Esophagus squamous epithelium (tissue), 5 donors: ENCODE measurements at regions of chr1 and their contacts with region 1.

Region 1: DNA sequence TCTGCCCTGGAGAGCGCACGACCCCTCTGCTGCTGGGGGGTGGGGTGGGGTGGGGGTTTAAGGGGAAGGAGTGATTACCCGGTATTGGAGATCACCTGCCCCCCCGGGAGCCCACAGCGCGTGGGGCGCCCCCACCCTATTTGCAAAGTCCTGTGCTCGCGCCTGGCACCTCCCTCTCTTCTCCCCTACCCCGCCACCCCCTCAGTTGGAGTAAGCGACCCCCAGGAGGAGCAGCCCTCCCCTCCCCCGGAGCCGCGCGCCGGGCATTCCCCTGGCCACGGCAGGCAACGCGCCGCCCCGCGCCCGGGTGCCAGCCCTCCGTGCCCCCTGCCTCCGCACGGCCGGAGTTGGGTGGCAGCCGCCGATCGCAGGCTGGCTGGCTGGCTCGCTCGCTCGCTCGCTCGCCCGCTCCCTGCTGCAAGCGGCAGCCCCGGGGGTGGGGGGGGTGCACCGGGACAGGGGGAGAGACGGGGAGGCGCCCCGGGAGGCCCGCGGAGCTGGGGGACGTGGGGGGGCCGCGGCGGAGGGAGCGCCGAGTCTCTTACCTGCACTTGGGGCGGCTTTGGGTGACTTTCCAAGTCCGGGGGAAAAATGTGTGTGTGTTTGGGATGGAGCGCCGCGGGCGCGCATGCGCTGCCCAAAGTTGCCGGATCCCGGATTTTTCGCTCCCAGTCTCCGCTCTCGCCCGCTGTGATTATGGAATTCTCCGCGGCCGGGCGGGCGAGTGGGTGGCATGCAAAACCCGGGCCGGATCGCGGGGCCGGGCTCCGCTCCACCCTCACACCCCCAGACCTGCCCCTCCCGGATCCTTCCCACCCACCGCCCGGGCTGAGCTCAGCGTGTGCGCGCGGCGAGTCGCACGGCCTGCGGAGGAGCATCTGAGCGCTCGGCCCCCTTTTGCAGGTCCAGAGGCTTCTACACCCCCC is at the start of gene CASZ1:
- DNase-seq: no peak
- H3K4me3 ChIP-seq: peak within 1 kb of the TSS; percentile 77 to 88 (median 86)
- H3K27ac ChIP-seq: peak within 1 kb of the TSS; percentile 85 to 93 (median 90)
- H3K4me1 ChIP-seq: peaks cover 6 to 58% (median 15%) of the 10 kb centered on the region in 3 donors
- H3K27me3 ChIP-seq: peaks cover 0 to 95% (median 0%) of the 10 kb centered on the region in 4 donors
- CTCF ChIP-seq: peak in 1 of 6 experiments; percentile 32
- POLR2A ChIP-seq: peak in 2 of 4 donors; percentile 24 to 81
- total RNA-seq, gene CASZ1: 13.1 to 33.7 (median 20.9) TPM

Region 2: DNA sequence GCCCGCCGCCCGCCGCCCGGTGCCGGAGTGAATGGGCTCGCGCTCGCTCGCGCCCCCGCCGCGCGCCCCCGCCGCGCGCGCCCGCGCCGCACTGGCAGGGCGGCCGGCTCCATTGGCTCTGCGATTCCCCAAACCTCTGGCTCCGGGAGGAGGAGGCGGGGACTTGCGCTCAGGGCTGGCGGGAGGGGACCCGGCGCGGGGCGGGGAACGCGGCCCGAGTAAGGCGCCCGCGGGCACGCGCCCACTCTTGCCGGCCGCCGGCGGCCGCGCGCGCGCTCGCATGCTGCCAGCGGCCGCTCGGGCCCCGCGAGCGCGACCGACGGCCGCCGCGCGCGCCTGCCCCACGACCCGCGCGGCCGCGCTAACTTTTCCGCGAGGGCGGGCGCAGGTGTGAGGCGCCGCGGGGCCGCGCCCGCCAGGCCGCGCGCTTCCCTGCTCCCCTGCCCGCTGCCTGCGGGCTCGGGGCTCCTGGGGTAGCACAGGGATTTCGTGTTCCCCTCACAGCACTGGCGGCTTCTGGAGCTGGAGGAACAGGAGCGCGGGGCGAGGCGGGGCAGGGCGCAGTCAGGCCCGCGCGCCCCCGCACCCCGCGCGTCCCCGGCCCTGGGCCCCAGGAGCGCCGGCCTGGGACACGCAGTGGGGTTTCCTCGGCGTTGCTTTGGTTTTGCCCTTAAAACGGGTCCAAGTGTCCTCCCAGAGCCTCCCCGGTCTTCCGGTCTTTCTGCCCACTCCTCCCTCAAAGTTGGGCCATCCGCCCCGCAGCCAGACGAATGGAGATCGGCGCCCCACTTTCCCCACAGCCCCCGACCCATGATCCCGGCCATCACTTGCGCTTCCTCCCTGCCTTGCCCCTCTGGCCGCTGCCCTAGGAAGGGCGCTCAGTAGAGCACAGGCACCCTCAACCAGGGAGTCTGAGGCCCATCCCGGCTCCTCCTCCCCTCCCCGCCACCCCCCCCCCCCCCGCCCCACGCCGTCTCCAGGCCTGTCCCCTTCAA is 101.4 kb before region 1 on chr1:
- intact Hi-C with region 1: loop called (anchors 10 kb)
- DNase-seq: no peak
- H3K4me3 ChIP-seq: peak overlapping the region; percentile 47 to 81 (median 78)
- H3K27ac ChIP-seq: peak overlapping the region; percentile 79 to 94 (median 89)
- H3K4me1 ChIP-seq: peaks cover 38 to 88% (median 50%) of the 10 kb centered on the region in 3 donors
- H3K27me3 ChIP-seq: no peaks in the 10 kb centered on the region
- CTCF ChIP-seq: no peak
- POLR2A ChIP-seq: no peak